Mucosa of descending colon (tissue), 3 donors: ENCODE measurements at regions of chr5 and their contacts with region 1.

Region 1: GRCh38 chr5:81859624-81860023 is 108.7 kb upstream of the SSBP2 start:
- DNase-seq: no peak
- ATAC-seq: no peak
- H3K4me3 ChIP-seq: no peak overlapping the region
- H3K4me1 ChIP-seq: no peaks in the 10 kb centered on the region
- CTCF ChIP-seq: no peak

Region 2: GRCh38 chr5:81675846-81676245 is 183.8 kb before region 1 on chr5:
- intact Hi-C with region 1: no loop called
- DNase-seq: no peak
- ATAC-seq: no peak
- H3K4me3 ChIP-seq: no peak overlapping the region
- H3K4me1 ChIP-seq: no peaks in the 10 kb centered on the region
- CTCF ChIP-seq: no peak

Region 3: GRCh38 chr5:81909677-81910076 is 50.1 kb after region 1 on chr5:
- intact Hi-C with region 1: no loop called
- DNase-seq: no peak
- ATAC-seq: no peak
- H3K4me3 ChIP-seq: no peak overlapping the region
- H3K4me1 ChIP-seq: no peaks in the 10 kb centered on the region
- CTCF ChIP-seq: no peak

Region 4: GRCh38 chr5:81965524-81965923 is 105.9 kb after region 1 on chr5:
- intact Hi-C with region 1: loop called in 1 of 2 experiments (anchors 5 kb)
- DNase-seq: no peak
- ATAC-seq: no peak
- H3K4me3 ChIP-seq: no peak overlapping the region
- H3K4me1 ChIP-seq: no peaks in the 10 kb centered on the region
- CTCF ChIP-seq: no peak